Cardiac septum (tissue), 1 donor: ENCODE measurements at regions of chr19 and their contacts with region 1.

Region 1: DNA sequence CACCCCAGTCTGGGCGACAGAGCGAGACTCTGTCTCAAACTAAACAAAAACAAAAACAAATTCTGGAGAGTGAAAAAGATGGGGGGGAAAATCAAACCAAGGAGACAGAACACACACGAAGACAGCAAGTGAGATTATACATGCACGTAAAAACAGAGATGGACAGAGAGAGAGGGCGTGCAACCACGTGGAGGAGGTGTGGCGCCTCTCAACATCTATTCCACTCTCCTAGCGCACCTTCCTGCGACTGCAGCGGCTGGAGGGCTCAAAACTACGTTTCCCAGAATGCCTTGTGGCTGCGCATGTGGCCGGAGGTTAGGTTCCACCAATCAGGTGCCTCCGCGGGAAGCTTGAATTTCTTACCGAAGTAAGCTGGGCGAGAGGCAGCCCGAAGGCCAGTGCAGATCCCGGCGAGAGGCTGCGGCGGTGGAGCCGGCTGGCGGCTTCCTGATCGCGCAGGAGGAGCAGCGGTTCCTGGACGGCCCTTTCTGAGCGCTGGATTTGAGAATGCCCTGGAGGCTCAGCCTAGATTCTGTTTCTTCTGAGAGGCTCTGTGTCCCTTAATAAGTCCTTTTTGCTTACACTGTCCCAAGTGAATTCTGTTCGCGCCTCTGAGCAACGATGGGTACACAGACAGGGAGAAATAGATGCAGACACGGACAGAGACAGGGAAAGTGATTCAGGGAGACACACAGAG is 13.1 kb upstream of the NANOS2 start:
- DNase-seq: peak; percentile 94

Region 2: GRCh38 chr19:46016426-46017094 is 88.8 kb after region 1 on chr19:
- intact Hi-C with region 1: loop called (anchors 5 kb)
- DNase-seq: peak; percentile 94